H1 (cell line): ENCODE measurements at regions of chr1 and their contacts with region 1.

Region 1: DNA sequence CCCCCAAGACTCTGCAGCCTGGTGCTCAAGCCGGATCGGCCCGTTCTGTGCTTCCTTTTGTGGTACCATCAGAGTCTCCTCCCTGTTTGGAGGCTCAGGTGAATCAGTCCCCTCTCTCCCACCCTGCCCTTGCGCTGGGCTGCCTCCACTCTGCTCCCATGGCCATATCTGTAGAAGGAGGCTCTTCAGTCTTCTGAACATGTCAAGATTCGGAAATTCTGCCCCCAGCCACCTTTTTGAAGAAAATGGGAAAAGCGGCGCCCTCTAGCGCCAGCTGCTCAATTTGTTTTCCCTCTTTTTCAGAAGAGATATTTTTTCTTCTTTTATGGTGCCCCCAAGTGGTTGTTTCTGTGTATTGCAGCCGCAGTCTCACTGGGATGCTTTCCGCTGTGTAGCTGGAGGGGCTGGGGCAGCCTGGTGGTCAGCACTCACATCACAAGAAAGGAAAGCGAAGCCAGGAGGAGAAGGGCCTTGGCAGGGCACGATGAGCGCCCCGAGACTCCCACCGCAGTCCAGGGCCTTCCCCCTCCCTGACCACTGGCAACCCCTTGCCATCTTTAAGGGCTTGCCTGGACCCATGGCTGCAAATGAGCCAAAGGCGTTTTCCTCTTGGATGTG is 58.4 kb upstream of the CACNA1E start:
- DNase-seq: peak; percentile 64 to 94
- H3K4me3 ChIP-seq: no peak overlapping the region
- H3K27ac ChIP-seq: no peak overlapping the region
- H3K4me1 ChIP-seq: no peaks in the 10 kb centered on the region
- H3K27me3 ChIP-seq: peaks cover 0 to 4% (median under 1%) of the 10 kb centered on the region in 4 experiments; a peak in 2 of 7 replicates
- CTCF ChIP-seq: peak; percentile 68 to 100 (median 94)
- EP300 ChIP-seq: no peak
- POLR2A ChIP-seq: no peak
- RAD21 ChIP-seq: peak; percentile 90 to 93

Region 2: GRCh38 chr1:181179987-181180365 is 244.9 kb before region 1 on chr1:
- CTCF ChIA-PET with region 1: interaction called, 16 read pairs
- POLR2A ChIA-PET with region 1: no interaction called
- DNase-seq: peak in 1 of 2 experiments; percentile 60
- H3K4me3 ChIP-seq: peak overlapping the region in 2 of 4 experiments; percentile 7 to 27; a peak in 3 of 8 replicates
- H3K27ac ChIP-seq: no peak overlapping the region
- H3K4me1 ChIP-seq: peaks cover 15 to 27% (median 21%) of the 10 kb centered on the region in 4 experiments
- H3K27me3 ChIP-seq: no peaks in the 10 kb centered on the region
- CTCF ChIP-seq: no peak
- EP300 ChIP-seq: no peak
- POLR2A ChIP-seq: no peak
- RAD21 ChIP-seq: no peak

Region 3: DNA sequence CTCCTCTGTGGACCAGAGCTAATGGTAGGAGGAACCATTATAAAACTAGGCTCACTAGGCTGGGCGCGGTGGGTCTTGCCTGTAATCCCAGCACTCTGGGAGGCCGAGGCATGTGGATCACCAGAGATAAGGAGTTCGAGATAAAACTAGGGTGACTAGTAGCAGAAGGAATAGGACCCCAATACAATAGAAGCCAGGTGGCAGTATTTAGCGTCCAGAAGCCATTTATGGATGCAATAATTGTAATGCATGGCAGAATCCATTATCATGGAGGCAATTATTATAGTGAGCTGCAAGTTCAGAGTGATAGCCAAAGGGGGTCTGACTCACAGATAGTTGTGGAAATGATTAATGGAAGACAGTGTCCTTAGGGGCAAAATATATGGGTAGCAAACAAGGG is 192.4 kb before region 1 on chr1:
- CTCF ChIA-PET with region 1: interaction called, 10 read pairs
- POLR2A ChIA-PET with region 1: no interaction called
- DNase-seq: no peak
- H3K4me3 ChIP-seq: no peak overlapping the region
- H3K27ac ChIP-seq: no peak overlapping the region
- H3K4me1 ChIP-seq: no peaks in the 10 kb centered on the region
- H3K27me3 ChIP-seq: no peaks in the 10 kb centered on the region
- CTCF ChIP-seq: no peak
- EP300 ChIP-seq: no peak
- POLR2A ChIP-seq: no peak
- RAD21 ChIP-seq: no peak

Region 4: DNA sequence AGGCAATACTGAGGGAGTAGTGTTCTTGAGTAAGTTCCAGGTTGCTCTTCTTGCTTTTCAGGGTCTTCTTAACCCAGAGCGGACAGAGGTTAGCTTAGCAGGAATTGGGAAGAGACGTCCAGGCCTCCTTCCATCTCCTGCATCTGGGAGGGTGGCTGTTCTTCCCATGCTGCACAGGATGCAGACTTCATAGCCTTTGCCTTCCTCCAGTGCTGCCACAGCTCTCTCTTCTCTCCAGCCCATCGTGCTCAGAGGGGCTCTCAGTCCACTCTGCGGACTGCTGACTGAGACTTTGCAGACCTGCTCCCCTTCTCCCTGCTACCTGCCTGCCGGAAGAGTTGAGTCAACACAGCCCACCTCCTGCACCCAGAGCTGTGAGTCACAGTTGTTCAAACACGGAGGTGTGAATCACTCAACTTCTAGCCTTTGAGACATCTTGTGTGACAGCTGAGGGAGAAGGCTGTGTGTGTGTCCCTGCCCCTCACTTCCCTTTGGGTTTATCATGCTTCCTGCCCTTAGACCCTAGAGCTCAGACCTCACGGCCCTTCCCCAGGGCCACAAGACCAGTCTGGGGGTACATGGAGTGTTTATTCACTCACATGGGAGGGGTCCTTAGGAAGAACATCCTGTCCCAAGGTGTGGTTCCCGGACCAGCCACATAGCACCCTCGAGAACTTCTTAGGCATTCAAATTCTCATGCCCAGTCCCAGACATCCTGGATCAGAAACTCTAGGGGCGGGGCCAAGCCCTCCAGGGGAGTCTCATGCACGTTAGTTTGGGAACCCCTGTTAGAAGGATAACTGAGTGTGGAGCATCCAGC is 99.9 kb before region 1 on chr1:
- CTCF ChIA-PET with region 1: interaction called, 10 read pairs
- POLR2A ChIA-PET with region 1: no interaction called
- DNase-seq: no peak
- H3K4me3 ChIP-seq: no peak overlapping the region
- H3K27ac ChIP-seq: no peak overlapping the region
- H3K4me1 ChIP-seq: no peaks in the 10 kb centered on the region
- H3K27me3 ChIP-seq: peaks cover 2 to 6% (median 6%) of the 10 kb centered on the region in 4 experiments
- CTCF ChIP-seq: no peak
- EP300 ChIP-seq: no peak
- POLR2A ChIP-seq: no peak
- RAD21 ChIP-seq: no peak

Region 5: GRCh38 chr1:181562395-181562794 is 137.5 kb after region 1 on chr1:
- CTCF ChIA-PET with region 1: no interaction called
- POLR2A ChIA-PET with region 1: no interaction called
- DNase-seq: no peak
- H3K4me3 ChIP-seq: no peak overlapping the region
- H3K27ac ChIP-seq: no peak overlapping the region
- H3K4me1 ChIP-seq: no peaks in the 10 kb centered on the region; a peak in 3 of 7 replicates
- H3K27me3 ChIP-seq: no peaks in the 10 kb centered on the region
- CTCF ChIP-seq: no peak
- EP300 ChIP-seq: no peak
- POLR2A ChIP-seq: no peak
- RAD21 ChIP-seq: no peak